ENCODE measurements at regions of chr7 and their contacts with region 1.

Region 1: GRCh38 chr7:80699045-80699638 is 60.7 kb downstream of the CD36 start:
- DNase-seq: no peak
- ATAC-seq: peak; percentile 51
- H3K4me3 ChIP-seq: no peak overlapping the region
- H3K4me1 ChIP-seq: no peaks in the 10 kb centered on the region
- CTCF ChIP-seq: peak; percentile 14

Region 2: GRCh38 chr7:80520194-80520593 is 178.9 kb before region 1 on chr7:
- intact Hi-C with region 1: no loop called
- DNase-seq: no peak
- ATAC-seq: no peak
- H3K4me3 ChIP-seq: no peak overlapping the region
- H3K4me1 ChIP-seq: no peaks in the 10 kb centered on the region
- CTCF ChIP-seq: no peak

Region 3: DNA sequence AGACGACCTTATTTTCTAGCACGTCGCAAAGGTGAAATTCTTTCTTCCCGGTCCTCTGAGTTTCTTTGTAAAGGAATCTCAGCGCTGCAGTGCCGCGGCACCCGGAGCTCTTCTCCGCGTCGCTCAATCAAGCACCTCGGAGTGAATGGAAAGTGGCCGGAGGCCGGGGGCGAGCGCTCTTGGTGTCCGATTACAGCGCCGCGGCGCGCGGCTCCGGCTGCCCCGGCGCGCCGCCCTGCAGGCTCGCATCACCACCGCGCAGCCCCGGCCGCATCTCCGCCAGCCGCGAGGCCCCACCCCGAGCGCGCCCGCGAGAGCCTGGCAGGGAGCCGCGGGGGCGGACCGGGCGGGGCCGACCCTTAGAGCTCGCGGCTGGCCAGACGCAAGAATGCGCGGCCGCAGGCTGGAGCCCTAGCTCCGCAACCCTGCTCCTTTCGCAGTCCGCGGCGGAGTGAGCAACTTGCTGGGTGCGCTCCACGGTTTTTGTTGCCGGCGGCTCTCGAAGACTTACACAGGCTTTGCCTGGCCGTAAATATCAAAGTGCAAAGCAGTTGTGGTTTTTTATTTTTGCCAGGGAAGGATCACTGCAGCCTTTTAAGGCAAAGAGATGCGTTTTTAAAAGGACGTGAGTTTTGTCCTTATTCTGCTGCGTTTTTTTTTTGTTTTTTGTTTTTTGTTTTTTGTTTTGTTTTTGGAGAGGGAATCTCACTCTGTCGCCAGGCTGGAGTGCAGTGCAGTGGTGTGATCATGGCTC is 219.9 kb after region 1 on chr7 and contains the start of gene SEMA3C:
- intact Hi-C with region 1: loop called in 1 of 2 experiments (anchors 10 kb)
- DNase-seq: peak; percentile 91 to 95 (median 92)
- ATAC-seq: peak; percentile 90
- H3K4me3 ChIP-seq: peak within 1 kb of the TSS; percentile 23
- H3K4me1 ChIP-seq: no peaks in the 10 kb centered on the region
- CTCF ChIP-seq: no peak
- total RNA-seq, gene SEMA3C: 72.4 to 150 (median 83.7) TPM

Region 4: DNA sequence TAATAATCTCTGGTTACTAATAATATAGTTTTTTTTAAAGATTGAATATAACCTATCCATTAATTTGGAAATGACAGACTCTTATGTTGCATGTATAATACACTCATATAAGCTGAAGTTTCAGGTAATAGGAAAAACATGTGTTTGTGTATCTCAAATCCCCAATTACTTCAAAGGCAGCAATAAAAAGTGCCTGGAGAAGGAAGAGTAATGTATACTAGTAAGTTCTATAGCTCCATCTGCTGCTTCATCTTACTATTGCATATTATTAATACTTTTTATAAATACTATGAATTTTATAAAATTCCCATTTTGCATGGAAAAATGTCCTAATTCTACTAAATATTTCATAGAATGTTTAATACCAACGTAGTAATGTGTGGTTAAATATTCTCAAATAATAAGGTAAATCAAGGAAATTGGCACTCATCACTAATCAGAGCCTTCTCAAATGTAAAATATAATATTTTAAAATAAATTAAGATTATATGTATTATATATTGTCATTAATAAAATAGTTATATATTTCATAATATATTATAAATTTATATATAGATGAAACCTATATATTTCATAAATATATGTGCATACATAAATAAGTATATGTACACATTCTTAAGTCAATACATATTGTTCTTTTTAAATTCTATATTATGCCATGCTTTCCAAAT is 758.8 kb after region 1 on chr7:
- intact Hi-C with region 1: loop called in 1 of 2 experiments (anchors 5 kb)
- DNase-seq: no peak
- ATAC-seq: no peak
- H3K4me3 ChIP-seq: no peak overlapping the region
- H3K4me1 ChIP-seq: no peaks in the 10 kb centered on the region
- CTCF ChIP-seq: no peak

Region 5: DNA sequence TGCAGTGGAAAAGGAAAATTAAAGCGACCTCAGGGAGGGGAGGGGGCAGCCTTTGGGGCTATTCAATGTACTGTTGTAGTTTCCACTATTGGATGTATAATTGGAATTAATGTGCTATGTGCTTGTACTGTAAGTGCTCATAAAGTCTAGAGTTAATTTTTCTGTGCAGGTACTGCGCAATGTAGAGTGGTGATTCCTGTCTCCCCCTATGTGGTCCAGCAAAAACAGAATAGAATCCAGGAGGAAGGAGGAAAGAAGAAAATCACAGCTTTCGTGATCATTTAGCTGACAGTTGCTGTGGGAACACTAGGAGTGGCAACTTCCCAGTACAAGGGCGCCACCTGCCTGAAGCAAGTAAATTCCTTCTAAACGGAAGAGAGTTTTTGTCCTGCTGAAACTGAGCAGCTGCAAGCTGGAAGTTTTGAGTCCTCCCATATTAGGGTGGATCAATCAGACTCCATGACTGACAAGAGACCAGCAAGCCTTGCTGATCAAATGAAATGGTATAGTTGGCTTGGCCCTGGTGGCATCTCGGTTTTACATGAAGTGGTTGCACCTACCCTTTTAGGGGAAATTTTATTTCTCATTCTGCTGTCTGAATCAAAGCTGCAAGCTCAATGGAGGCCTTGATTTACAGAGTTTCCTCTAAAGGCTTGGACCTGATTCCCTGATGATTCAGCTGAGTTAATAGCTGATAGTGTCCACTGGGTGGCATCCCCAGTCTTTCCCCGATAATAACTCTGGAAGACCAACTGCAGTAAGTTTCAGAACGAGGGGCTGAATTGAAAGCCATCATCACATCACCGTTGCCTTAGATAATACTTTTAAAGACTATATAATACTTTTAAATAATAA is 771.0 kb after region 1 on chr7:
- intact Hi-C with region 1: loop called (anchors 5 kb)
- DNase-seq: peak; percentile 69 to 79 (median 72)
- ATAC-seq: peak; percentile 88
- H3K4me3 ChIP-seq: no peak overlapping the region
- H3K4me1 ChIP-seq: peaks cover 12% of the 10 kb centered on the region
- CTCF ChIP-seq: peak; percentile 20

Measured in mucosa of descending colon (tissue), 3 donors.